PC-3 (cell line): ENCODE measurements at regions of chr15 and their contacts with region 1.

Region 1: GRCh38 chr15:100341662-100342560 is at the start of gene ADAMTS17:
- DNase-seq: peak; percentile 95
- ATAC-seq: peak; percentile 87
- H3K4me3 ChIP-seq: peak within 1 kb of the TSS; percentile 90
- H3K27ac ChIP-seq: no peak within 1 kb of the TSS
- H3K4me1 ChIP-seq: peaks cover 20% of the 10 kb centered on the region
- H3K27me3 ChIP-seq: no peaks in the 10 kb centered on the region
- CTCF ChIP-seq: peak; percentile 86
- total RNA-seq, gene ADAMTS17: 5.5 and 6.9 TPM in 2 replicates

Region 2: DNA sequence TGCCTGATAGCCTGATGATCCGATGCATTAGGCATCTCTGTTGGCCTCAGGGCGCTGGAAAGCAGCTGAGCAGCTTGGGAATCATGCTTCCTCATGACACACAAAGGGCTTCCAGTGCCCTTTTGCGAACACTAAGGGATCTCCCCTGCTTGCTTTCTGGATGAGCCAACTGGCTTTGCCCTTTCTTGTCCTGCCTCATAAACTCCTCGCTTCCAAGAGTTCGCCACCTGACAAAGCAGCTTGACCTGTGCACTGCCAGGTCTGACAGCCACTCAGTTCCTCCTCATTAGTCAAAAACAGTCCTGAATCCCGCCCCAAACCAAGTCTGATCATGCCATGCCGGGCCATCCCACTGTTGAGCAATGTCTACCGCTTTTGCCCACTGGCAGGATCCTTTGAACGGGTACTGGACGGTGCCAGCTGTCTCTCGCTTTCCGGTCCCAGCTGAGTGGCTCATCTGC is 343.2 kb before region 1 on chr15:
- CTCF ChIA-PET with region 1: no interaction called
- POLR2A ChIA-PET with region 1: no interaction called
- intact Hi-C with region 1: loop called (anchors 1 kb)
- DNase-seq: peak; percentile 53
- ATAC-seq: peak; percentile 42
- H3K4me3 ChIP-seq: no peak overlapping the region
- H3K27ac ChIP-seq: no peak overlapping the region
- H3K4me1 ChIP-seq: no peaks in the 10 kb centered on the region
- H3K27me3 ChIP-seq: no peaks in the 10 kb centered on the region
- CTCF ChIP-seq: no peak

Region 3: GRCh38 chr15:100383302-100384107 is 41.6 kb after region 1 on chr15:
- CTCF ChIA-PET with region 1: no interaction called
- POLR2A ChIA-PET with region 1: no interaction called
- intact Hi-C with region 1: loop called (anchors 1 kb)
- DNase-seq: peak; percentile 75
- ATAC-seq: peak; percentile 73
- H3K4me3 ChIP-seq: no peak overlapping the region
- H3K27ac ChIP-seq: no peak overlapping the region
- H3K4me1 ChIP-seq: no peaks in the 10 kb centered on the region
- H3K27me3 ChIP-seq: peaks cover 12% of the 10 kb centered on the region
- CTCF ChIP-seq: peak; percentile 80

Region 4: GRCh38 chr15:100602064-100602822 is 260.3 kb after region 1 on chr15 and contains the starts of genes ASB7 and LINS1:
- CTCF ChIA-PET with region 1: no interaction called
- POLR2A ChIA-PET with region 1: interaction called, 22 read pairs
- intact Hi-C with region 1: no loop called
- DNase-seq: peak; percentile 100
- ATAC-seq: peak; percentile 94
- H3K4me3 ChIP-seq: peak within 1 kb of the TSS; percentile 98
- H3K27ac ChIP-seq: peak within 1 kb of the TSS; percentile 25
- H3K4me1 ChIP-seq: peaks cover 22% of the 10 kb centered on the region
- H3K27me3 ChIP-seq: no peaks in the 10 kb centered on the region
- CTCF ChIP-seq: no peak
- total RNA-seq, gene ASB7: 7.8 and 9.6 TPM in 2 replicates
- total RNA-seq, gene LINS1: 8.5 and 12.0 TPM in 2 replicates

Region 5: GRCh38 chr15:100902436-100903167 is 560.7 kb after region 1 on chr15:
- CTCF ChIA-PET with region 1: no interaction called
- POLR2A ChIA-PET with region 1: no interaction called
- intact Hi-C with region 1: no loop called
- DNase-seq: peak; percentile 65
- ATAC-seq: peak; percentile 51
- H3K4me3 ChIP-seq: no peak overlapping the region
- H3K27ac ChIP-seq: peak overlapping the region; percentile 72
- H3K4me1 ChIP-seq: no peaks in the 10 kb centered on the region; the same call in 1 of the 2 replicates
- H3K27me3 ChIP-seq: no peaks in the 10 kb centered on the region
- CTCF ChIP-seq: no peak

Region 6: DNA sequence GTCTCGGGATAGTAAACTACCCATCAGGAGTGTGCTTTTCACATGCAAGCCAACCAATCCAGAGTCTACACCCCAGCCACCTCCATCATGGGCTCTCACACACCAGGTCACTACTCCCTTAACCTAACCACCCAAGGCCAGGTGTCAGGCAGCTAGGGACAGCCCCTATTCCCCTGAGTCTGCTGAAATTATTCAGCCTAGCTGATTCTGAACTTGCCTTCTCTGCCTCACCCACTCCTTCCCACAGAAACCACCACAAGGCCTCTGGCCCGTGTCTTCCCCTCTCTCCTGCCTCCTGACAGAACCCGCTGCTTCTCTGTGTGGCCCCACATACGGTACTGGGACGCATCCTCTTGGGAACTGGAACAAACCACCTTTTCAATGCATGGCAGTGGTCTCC is 1065.5 kb after region 1 on chr15:
- CTCF ChIA-PET with region 1: no interaction called
- POLR2A ChIA-PET with region 1: no interaction called
- intact Hi-C with region 1: no loop called
- DNase-seq: no peak
- ATAC-seq: no peak
- H3K4me3 ChIP-seq: no peak overlapping the region
- H3K27ac ChIP-seq: no peak overlapping the region
- H3K4me1 ChIP-seq: no peaks in the 10 kb centered on the region
- H3K27me3 ChIP-seq: peaks cover 47% of the 10 kb centered on the region
- CTCF ChIP-seq: no peak